ENCODE measurements at regions of chr1 and their contacts with region 1.

Region 1: GRCh38 chr1:244796718-244797406 is 38.6 kb upstream of the COX20 start:
- DNase-seq: peak; percentile 35
- ATAC-seq: peak; percentile 68
- H3K4me3 ChIP-seq: no peak overlapping the region
- H3K27ac ChIP-seq: no peak overlapping the region
- H3K4me1 ChIP-seq: peaks cover 7 to 15% of the 10 kb centered on the region in 2 experiments; a peak in 3 of 4 replicates
- H3K27me3 ChIP-seq: no peaks in the 10 kb centered on the region
- CTCF ChIP-seq: peak; percentile 70 to 90 (median 85)
- POLR2A ChIP-seq: no peak
- RAD21 ChIP-seq: peak; percentile 94

Region 2: DNA sequence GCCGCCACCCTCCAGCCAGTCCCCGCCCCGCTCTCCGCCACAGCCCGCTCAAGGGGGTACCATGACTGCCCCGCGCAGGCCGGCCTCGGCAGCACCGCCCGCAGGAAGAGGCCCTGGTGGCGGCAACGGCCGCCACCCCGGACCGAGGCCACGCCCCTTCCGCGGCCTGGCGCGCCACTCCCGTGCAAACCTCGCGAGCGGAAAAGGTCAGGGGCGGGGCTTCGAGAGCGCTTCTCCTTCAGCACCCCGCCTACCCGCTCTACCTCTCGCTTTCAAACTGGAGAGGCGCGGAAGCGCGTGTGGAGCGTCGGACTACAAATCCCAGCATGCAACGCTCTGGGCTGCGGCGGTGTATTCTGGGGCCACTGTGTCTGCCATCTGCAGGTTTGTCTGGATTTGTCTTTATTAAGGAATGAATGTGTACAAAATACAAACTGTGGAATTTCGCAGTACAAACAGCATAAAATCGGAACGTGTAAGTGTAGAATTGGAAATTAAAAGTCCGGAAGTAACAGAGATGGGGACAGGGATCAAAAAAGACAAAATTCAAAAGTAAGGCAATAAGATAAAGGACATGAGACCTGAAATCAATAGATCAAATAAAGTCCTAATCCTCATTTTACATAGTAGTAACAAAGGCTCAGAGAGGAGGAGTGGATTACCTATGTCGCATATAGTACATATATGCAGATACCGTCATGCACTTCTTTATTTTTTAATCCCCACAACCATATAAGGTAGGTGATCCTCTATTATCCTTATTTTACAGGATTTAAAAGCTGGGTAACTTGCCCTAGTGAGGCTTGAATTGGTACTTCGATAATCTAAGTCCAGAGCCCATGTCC is 344.7 kb before region 1 on chr1:
- CTCF ChIA-PET with region 1: no interaction called
- POLR2A ChIA-PET with region 1: no interaction called
- RAD21 ChIA-PET with region 1: no interaction called
- intact Hi-C with region 1: loop called (anchors 10 kb)
- DNase-seq: peak; percentile 98
- ATAC-seq: peak; percentile 96
- H3K4me3 ChIP-seq: peak overlapping the region; percentile 92
- H3K27ac ChIP-seq: peak overlapping the region; percentile 56
- H3K4me1 ChIP-seq: peaks cover 4 to 17% of the 10 kb centered on the region in 2 experiments; a peak in 3 of 4 replicates
- H3K27me3 ChIP-seq: no peaks in the 10 kb centered on the region
- CTCF ChIP-seq: peak; percentile 24 to 43 (median 34); a peak in 5 of 6 replicates
- POLR2A ChIP-seq: no peak
- RAD21 ChIP-seq: peak; percentile 57

Region 3: DNA sequence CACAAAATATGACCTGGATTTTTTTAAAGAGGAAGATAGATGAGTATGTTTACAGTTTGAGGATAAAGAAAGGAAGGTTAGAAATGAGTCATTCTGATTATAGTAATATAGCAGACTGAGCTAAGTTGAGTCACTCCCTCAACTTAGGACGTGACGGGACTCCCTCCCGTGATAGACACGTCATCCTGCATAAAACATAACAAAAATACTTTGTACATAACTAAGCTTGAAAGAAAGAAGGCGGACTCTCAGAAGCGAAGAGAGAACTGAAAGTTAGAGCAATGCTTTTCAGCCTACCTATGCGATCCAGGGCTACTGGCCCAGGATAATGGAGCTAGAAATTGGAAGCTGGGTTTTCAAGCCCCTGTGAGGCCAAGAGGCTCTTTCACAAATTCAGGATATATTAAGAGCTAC is 196.9 kb before region 1 on chr1:
- CTCF ChIA-PET with region 1: interaction called, 66 read pairs
- POLR2A ChIA-PET with region 1: interaction called, 3 read pairs
- RAD21 ChIA-PET with region 1: interaction called, 9 to 11 read pairs
- intact Hi-C with region 1: loop called (anchors 1 kb)
- DNase-seq: peak; percentile 74
- ATAC-seq: peak; percentile 88
- H3K4me3 ChIP-seq: peak overlapping the region; percentile 22 to 42
- H3K27ac ChIP-seq: peak overlapping the region; percentile 42; the same call in 1 of the 2 replicates
- H3K4me1 ChIP-seq: peaks cover 7 to 22% of the 10 kb centered on the region in 2 experiments; a peak in 2 of 4 replicates
- H3K27me3 ChIP-seq: no peaks in the 10 kb centered on the region
- CTCF ChIP-seq: no peak
- POLR2A ChIP-seq: no peak
- RAD21 ChIP-seq: no peak